Dorsolateral prefrontal cortex (tissue), 120 donors: ENCODE measurements at regions of chr19 and their contacts with region 1.

Region 1: DNA sequence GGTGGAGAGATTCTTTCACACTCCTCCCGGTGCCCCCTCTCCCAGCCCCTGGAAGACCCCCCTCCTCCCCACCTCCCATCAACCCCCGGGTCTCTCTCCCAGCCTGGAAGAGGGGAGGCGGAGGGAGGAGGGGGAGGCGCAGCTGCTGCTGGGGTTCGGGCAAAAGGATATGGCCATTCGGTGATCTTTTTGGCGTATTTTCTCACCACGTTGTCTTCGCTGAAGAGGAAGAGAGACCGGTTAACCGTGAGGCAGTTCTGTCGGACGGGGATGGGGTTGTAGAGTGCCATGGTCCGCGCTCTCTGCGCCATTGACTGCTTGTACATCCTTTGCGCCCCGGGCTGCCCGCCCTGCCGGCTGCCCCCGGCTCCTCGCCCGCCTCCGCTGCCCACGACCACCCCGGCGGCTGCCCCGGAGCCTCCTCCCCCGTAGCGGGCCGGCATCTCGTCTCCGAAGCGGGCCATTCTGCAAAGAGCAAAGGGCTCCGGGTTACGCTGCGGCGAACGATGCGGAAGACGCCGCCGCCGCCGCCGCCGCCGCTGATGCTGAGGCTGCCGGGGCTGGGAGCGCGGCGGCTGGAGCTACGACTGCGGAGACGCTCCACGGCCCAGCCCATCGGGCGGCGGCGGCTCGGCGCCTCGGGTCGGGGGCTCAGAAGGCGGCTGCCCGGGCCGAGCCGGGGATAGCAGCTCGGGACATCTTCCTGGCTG is 363 bp downstream of the CACNA1A start:
- DNase-seq: peak in 2 of 10 donors; percentile 46 to 51
- H3K4me3 ChIP-seq: peak overlapping the region; percentile 19 to 83 (median 68)
- H3K27ac ChIP-seq: peak overlapping the region in 58 of 59 donors; percentile 15 to 93 (median 81)
- H3K27me3 ChIP-seq: peaks cover 0 to 40% (median 4%) of the 10 kb centered on the region in 45 donors
- CTCF ChIP-seq: no peak

Region 2: DNA sequence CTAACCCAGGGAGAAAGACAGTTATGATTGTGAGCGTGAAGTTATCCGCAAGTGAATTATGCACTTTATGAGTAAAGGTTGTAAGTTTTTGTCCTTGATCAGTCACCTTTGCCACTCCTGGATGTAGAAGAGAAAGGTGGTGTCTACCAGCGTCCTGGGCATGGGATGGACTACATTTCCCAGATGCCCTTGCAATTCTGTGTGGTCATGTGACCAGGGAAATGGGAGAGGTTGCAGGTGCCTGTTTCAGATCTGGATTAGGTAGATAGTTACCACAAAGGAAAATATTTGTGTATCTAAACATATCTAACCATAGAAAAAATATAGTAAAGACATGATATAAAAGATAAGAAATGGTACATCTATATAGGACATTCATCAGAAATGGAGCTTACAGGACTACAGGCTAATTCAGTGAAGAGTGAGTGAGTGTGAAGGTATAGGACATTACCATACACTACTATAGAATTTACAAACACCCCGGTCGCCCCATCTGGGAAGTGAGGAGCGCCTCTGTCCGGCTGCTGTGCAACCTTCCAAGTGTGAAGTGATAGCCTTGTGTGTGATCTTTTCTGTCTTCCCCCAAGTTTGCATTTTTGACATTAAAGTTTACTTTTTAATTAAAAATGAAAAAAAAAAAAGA is 52.0 kb after region 1 on chr19:
- intact Hi-C with region 1: loop called in 1 of 2 experiments (anchors 5 kb)
- DNase-seq: peak in 2 of 10 donors; percentile 43 to 57
- H3K4me3 ChIP-seq: no peak overlapping the region
- H3K27ac ChIP-seq: peak overlapping the region in 16 of 59 donors; percentile 9 to 77 (median 62)
- H3K27me3 ChIP-seq: peaks cover 0 to 2% (median 0%) of the 10 kb centered on the region in 45 donors
- CTCF ChIP-seq: no peak